Activated CD8-positive, alpha-beta memory T cell treated with anti-CD3 and anti-CD28 coated beads, Interleukin-2, amount 10 ng/mL, durations not matched to agents 7 days and 5 days (primary cell): ENCODE measurements at regions of chr17 and their contacts with region 1.

Region 1: DNA sequence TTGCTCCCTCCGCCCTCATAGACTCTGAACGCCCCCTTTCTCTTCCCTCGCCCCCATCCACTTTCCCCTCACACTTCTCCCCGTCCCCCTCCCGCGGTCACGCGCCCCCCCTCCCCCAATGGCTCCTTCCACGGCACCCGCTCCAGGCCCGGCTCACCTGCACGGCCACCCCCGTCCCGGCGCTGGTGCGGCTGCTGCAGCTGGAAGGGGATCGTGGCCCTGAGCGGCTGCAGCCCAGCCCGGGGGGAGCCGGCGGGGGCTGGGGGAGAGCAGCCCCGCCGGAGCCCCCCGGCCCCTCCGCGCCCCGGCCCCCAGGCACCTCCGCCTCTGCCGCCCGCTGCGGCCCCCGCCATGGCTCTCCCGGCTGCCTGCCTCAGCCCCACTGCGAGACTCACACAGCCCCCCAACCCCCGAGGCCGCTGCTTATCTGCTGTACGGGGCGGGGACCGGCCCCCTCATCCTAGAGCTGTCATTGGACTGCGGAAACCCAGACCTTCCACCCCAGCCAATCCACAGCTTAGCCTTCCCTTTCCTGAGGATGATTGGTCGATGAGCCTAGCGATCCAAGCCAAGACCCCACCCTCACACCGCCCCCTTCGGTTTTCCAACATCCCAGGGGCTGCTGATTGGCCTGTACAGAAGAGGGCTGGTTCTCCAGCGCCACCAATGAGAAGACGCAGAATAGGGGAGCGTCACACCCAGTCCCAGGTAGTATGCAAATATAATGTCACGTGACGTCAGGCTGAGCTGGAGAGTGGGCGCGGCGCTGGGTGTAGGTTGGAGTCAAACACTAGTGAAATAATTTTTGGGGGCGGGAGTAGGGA is at the start of gene FAM117A:
- DNase-seq: peak; percentile 100
- ATAC-seq: peak; percentile 95
- H3K4me3 Mint-ChIP-seq: peak within 1 kb of the TSS; percentile 94
- H3K27ac Mint-ChIP-seq: peak within 1 kb of the TSS; percentile 90
- H3K4me1 Mint-ChIP-seq: peaks cover 48% of the 10 kb centered on the region
- H3K27me3 Mint-ChIP-seq: peaks cover 26% of the 10 kb centered on the region
- total RNA-seq, gene FAM117A: 31.6 to 44.9 TPM

Region 2: DNA sequence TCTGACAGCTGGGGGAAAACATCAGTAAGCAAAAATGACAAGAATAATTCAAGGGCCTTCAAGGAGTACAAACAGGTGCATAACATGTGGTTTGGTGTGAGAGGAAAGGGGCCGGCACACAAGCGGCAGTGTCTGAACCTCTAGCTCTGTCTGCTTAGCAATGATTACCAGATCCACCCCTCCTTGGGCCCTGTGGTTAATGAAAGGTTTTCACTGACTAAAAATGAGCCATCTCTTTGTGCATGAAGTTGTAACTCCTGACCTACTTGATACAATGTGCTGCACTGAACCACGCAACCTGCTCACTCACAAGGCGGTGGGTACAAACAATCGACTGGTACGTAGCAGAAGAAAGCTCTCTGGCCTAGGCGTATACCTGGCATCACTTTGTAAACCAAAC is 15.2 kb before region 1 on chr17:
- CTCF ChIA-PET with region 1: interaction called, 42 read pairs
- DNase-seq: peak; percentile 85
- ATAC-seq: peak; percentile 76
- H3K4me3 Mint-ChIP-seq: peak overlapping the region; percentile 69
- H3K27ac Mint-ChIP-seq: peak overlapping the region; percentile 94
- H3K4me1 Mint-ChIP-seq: peaks cover 74% of the 10 kb centered on the region
- H3K27me3 Mint-ChIP-seq: no peaks in the 10 kb centered on the region

Region 3: GRCh38 chr17:49779739-49780231 is 15.8 kb after region 1 on chr17:
- CTCF ChIA-PET with region 1: interaction called, 11 read pairs
- DNase-seq: peak; percentile 55
- ATAC-seq: peak; percentile 63
- H3K4me3 Mint-ChIP-seq: no peak overlapping the region
- H3K27ac Mint-ChIP-seq: no peak overlapping the region
- H3K4me1 Mint-ChIP-seq: peaks cover 23% of the 10 kb centered on the region
- H3K27me3 Mint-ChIP-seq: no peaks in the 10 kb centered on the region

Region 4: GRCh38 chr17:49788478-49789242 is 24.7 kb after region 1 on chr17 and contains the start of gene KAT7:
- CTCF ChIA-PET with region 1: interaction called, 17 read pairs
- DNase-seq: peak; percentile 99
- ATAC-seq: peak; percentile 95
- H3K4me3 Mint-ChIP-seq: peak within 1 kb of the TSS; percentile 91
- H3K27ac Mint-ChIP-seq: peak within 1 kb of the TSS; percentile 97
- H3K4me1 Mint-ChIP-seq: peaks cover 53% of the 10 kb centered on the region
- H3K27me3 Mint-ChIP-seq: no peaks in the 10 kb centered on the region
- total RNA-seq, gene KAT7: 76.9 to 80.6 TPM

Region 5: GRCh38 chr17:49809056-49809455 is 45.1 kb after region 1 on chr17:
- CTCF ChIA-PET with region 1: no interaction called
- DNase-seq: no peak
- ATAC-seq: no peak
- H3K4me3 Mint-ChIP-seq: no peak overlapping the region
- H3K27ac Mint-ChIP-seq: no peak overlapping the region
- H3K4me1 Mint-ChIP-seq: peaks cover 4% of the 10 kb centered on the region
- H3K27me3 Mint-ChIP-seq: no peaks in the 10 kb centered on the region

Region 6: GRCh38 chr17:49901460-49902331 is 137.7 kb after region 1 on chr17:
- CTCF ChIA-PET with region 1: no interaction called
- DNase-seq: no peak
- ATAC-seq: no peak
- H3K4me3 Mint-ChIP-seq: no peak overlapping the region
- H3K27ac Mint-ChIP-seq: no peak overlapping the region
- H3K4me1 Mint-ChIP-seq: no peaks in the 10 kb centered on the region
- H3K27me3 Mint-ChIP-seq: peaks cover 79% of the 10 kb centered on the region